B cell (primary cell): ENCODE measurements at regions of chr9 and their contacts with region 1.

Region 1: GRCh38 chr9:128927731-128928411 is 7.1 kb downstream of the PHYHD1 start:
- DNase-seq: peak; percentile 70
- ATAC-seq: peak; percentile 82
- H3K4me3 ChIP-seq: no peak overlapping the region
- H3K4me3 Mint-ChIP-seq: no peak overlapping the region
- H3K27ac ChIP-seq: no peak overlapping the region
- H3K27ac Mint-ChIP-seq: no peak overlapping the region
- H3K4me1 ChIP-seq: peaks cover 0 to 4% of the 10 kb centered on the region in 2 donors
- H3K4me1 Mint-ChIP-seq: peaks cover 6% of the 10 kb centered on the region
- H3K27me3 ChIP-seq: no peaks in the 10 kb centered on the region
- H3K27me3 Mint-ChIP-seq: peaks cover 2% of the 10 kb centered on the region
- CTCF ChIP-seq: peak; percentile 90

Region 2: GRCh38 chr9:128643519-128644300 is 284.2 kb before region 1 on chr9:
- CTCF ChIA-PET with region 1: interaction called, 29 read pairs
- POLR2A ChIA-PET with region 1: no interaction called
- intact Hi-C with region 1: loop called (anchors 2 kb)
- DNase-seq: peak; percentile 50
- ATAC-seq: peak; percentile 71
- H3K4me3 ChIP-seq: no peak overlapping the region
- H3K4me3 Mint-ChIP-seq: peak overlapping the region; percentile 69
- H3K27ac ChIP-seq: peak overlapping the region; percentile 29 to 56
- H3K27ac Mint-ChIP-seq: peak overlapping the region; percentile 92
- H3K4me1 ChIP-seq: peaks cover 6 to 15% of the 10 kb centered on the region in 2 donors
- H3K4me1 Mint-ChIP-seq: peaks cover 18% of the 10 kb centered on the region
- H3K27me3 ChIP-seq: no peaks in the 10 kb centered on the region
- H3K27me3 Mint-ChIP-seq: no peaks in the 10 kb centered on the region
- CTCF ChIP-seq: no peak

Region 3: DNA sequence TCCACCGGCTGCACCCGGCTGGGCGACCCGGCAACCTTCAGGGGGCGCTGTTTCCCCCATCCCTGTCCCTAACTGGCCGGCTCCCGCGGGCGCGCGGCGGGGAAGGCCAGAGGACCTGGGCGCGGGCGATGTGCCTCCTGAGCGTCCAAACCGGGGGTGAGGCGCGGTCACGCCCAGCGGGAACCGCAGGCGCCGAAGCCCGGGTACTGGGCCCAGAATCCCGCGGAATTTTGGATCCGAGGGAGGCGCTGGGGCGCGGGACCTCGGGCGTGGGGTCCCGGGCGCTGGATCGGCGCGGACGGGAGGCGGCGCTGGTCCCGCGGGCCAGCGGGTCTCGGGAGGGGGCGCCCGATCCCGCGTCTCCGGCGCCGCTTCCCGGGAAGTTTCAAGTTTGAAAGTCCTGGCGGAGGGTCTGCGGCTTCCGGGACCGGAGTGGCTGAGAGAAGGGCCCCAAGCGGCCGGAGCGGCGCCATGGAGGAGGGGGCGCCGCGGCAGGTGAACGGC is 225.4 kb before region 1 on chr9 and contains the start of gene PKN3:
- CTCF ChIA-PET with region 1: interaction called, 6 read pairs
- POLR2A ChIA-PET with region 1: no interaction called
- intact Hi-C with region 1: loop called (anchors 1 kb)
- DNase-seq: peak; percentile 89
- ATAC-seq: peak; percentile 89
- H3K4me3 ChIP-seq: peak within 1 kb of the TSS; percentile 11 to 83 (median 67)
- H3K4me3 Mint-ChIP-seq: peak within 1 kb of the TSS; percentile 91
- H3K27ac ChIP-seq: no peak within 1 kb of the TSS
- H3K27ac Mint-ChIP-seq: peak within 1 kb of the TSS; percentile 76
- H3K4me1 ChIP-seq: peaks cover 9 to 17% of the 10 kb centered on the region in 2 donors
- H3K4me1 Mint-ChIP-seq: peaks cover 10% of the 10 kb centered on the region
- H3K27me3 ChIP-seq: no peaks in the 10 kb centered on the region
- H3K27me3 Mint-ChIP-seq: no peaks in the 10 kb centered on the region
- CTCF ChIP-seq: peak; percentile 96
- total RNA-seq, gene PKN3: 3.7 and 4.2 TPM in 2 replicates

Region 4: DNA sequence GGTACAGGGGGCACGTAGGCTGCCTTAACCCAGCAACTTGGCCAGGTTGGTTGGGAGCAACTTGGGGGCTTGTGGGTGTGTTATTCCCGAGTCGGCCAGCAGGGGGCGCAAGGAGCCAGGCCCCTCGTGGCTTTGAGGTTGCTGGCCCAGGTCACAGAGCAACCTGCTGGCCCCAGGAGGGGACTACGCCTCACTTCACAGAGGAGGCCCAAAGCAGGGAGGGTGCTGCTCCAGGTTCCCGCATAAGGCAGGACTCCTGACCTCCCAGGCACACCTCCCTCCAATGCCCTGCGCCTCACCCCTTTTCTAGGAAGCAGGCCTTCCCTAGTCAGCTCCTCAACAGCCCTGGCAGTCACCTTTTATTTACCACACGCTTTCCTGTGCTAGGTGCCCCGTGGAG is 64.2 kb before region 1 on chr9:
- CTCF ChIA-PET with region 1: interaction called, 203 read pairs
- POLR2A ChIA-PET with region 1: interaction called, 3 read pairs
- intact Hi-C with region 1: loop called (anchors 1 kb)
- DNase-seq: peak; percentile 86
- ATAC-seq: peak; percentile 98
- H3K4me3 ChIP-seq: no peak overlapping the region
- H3K4me3 Mint-ChIP-seq: no peak overlapping the region
- H3K27ac ChIP-seq: no peak overlapping the region
- H3K27ac Mint-ChIP-seq: peak overlapping the region; percentile 37
- H3K4me1 ChIP-seq: peaks cover 3 to 4% of the 10 kb centered on the region in 2 donors
- H3K4me1 Mint-ChIP-seq: peaks cover 4% of the 10 kb centered on the region
- H3K27me3 ChIP-seq: no peaks in the 10 kb centered on the region
- H3K27me3 Mint-ChIP-seq: no peaks in the 10 kb centered on the region
- CTCF ChIP-seq: peak; percentile 92